ENCODE measurements at regions of chr16 and their contacts with region 1.

Region 1: DNA sequence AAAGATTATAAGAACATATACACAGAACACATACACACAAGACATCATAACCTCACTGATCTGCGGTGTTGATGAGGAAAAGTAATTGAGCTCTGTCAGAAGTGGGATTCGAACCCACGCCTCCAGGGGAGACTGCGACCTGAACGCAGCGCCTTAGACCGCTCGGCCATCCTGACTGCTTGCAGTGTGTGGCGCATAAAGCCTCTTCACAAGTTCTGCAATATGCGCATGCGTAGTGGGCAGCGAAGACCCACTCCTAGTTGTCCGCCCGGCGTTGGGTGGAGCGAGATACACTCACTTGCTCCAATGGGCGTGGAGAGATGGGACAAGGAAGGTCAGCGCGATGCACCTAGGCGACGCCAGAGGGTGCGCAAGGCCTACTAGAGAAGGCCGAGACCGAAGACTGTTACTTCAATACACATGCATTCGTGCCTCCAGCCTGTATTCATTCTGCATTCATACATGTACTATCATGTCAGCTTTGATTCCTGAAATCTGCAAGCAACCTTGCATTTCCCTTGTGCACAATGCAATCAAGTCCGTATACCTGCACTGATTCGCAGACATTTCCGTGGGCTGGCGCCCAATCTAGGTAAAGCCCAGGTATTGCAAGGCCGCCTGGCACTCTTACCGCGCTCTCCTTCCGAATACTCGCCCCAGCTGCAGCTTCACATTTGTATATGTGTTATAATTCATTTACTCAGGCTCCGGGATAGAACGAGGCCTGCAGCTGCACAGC is 16.1 kb upstream of the PLLP start:
- DNase-seq: peak; percentile 99
- H3K4me3 ChIP-seq: peak overlapping the region; percentile 52
- H3K4me3 Mint-ChIP-seq: peak overlapping the region; percentile 21
- H3K27ac Mint-ChIP-seq: no peak overlapping the region
- H3K4me1 ChIP-seq: peaks cover 30% of the 10 kb centered on the region
- H3K4me1 Mint-ChIP-seq: peaks cover 26% of the 10 kb centered on the region
- H3K27me3 ChIP-seq: no peaks in the 10 kb centered on the region
- H3K27me3 Mint-ChIP-seq: no peaks in the 10 kb centered on the region
- CTCF ChIP-seq: peak; percentile 97

Region 2: GRCh38 chr16:56938422-56939156 is 362.0 kb before region 1 on chr16:
- CTCF ChIA-PET with region 1: no interaction called
- POLR2A ChIA-PET with region 1: no interaction called
- intact Hi-C with region 1: no loop called
- DNase-seq: no peak
- H3K4me3 ChIP-seq: no peak overlapping the region
- H3K4me3 Mint-ChIP-seq: no peak overlapping the region
- H3K27ac Mint-ChIP-seq: peak overlapping the region; percentile 43
- H3K4me1 ChIP-seq: peaks cover 12% of the 10 kb centered on the region
- H3K4me1 Mint-ChIP-seq: peaks cover 23% of the 10 kb centered on the region
- H3K27me3 ChIP-seq: no peaks in the 10 kb centered on the region
- H3K27me3 Mint-ChIP-seq: no peaks in the 10 kb centered on the region
- CTCF ChIP-seq: no peak

Region 3: DNA sequence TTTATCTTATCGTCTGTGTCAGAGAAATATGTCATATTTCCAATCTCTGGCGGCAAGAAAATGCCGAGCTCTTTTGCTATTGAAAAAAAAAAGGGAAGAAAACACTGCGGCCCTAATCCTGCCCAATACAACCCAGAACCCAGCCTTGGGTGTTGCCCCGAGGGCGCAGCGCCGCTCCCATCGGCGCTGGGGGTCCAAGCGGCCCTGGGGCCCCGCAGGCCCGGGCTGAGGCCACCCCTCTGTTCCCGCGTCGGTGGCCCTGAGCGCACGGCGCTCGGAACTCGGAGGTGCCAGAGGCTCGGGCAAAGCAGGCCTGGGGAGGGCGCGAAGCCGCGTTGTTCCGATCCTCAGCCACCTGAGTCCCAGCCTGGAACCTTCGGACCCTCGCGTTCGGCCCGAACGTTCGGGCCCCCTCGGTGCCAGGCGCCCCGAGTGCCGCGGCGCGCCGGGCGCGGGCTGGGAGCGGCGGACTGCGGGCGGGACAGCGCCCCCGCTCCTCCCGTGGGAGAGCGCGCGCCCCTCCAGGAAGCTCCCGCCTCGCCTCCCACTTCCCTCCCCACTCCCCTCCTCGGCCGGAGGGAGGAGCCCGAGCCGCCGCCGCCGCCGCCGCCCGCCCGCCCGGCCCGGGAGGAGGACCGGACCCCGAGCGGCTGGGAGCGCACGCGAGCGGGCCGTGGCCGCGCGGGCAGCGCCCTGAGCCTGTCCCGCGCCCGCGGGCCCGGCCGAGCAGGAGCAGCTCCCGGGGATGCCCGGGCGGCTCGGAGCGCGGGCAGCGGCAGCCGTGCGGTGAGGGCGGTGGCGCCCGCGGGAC is 208.4 kb before region 1 on chr16 and contains the start of gene CPNE2:
- CTCF ChIA-PET with region 1: no interaction called
- POLR2A ChIA-PET with region 1: no interaction called
- intact Hi-C with region 1: loop called (anchors 5 kb)
- DNase-seq: peak; percentile 68 to 82
- H3K4me3 ChIP-seq: peak within 1 kb of the TSS; percentile 85
- H3K4me3 Mint-ChIP-seq: peak within 1 kb of the TSS; percentile 77
- H3K27ac Mint-ChIP-seq: peak within 1 kb of the TSS; percentile 59
- H3K4me1 ChIP-seq: peaks cover 14% of the 10 kb centered on the region
- H3K4me1 Mint-ChIP-seq: peaks cover 12% of the 10 kb centered on the region
- H3K27me3 ChIP-seq: no peaks in the 10 kb centered on the region
- H3K27me3 Mint-ChIP-seq: no peaks in the 10 kb centered on the region
- CTCF ChIP-seq: peak in 1 of 2 experiments; percentile 7
- total RNA-seq, gene CPNE2: 37.7 and 46.3 TPM in 2 replicates

Region 4: GRCh38 chr16:57244767-57245471 is 55.6 kb before region 1 on chr16 and contains the start of gene ARL2BP:
- CTCF ChIA-PET with region 1: interaction called, 7 read pairs
- POLR2A ChIA-PET with region 1: interaction called, 5 read pairs
- intact Hi-C with region 1: loop called (anchors 1 kb)
- DNase-seq: peak; percentile 99 to 100
- H3K4me3 ChIP-seq: peak within 1 kb of the TSS; percentile 51
- H3K4me3 Mint-ChIP-seq: peak within 1 kb of the TSS; percentile 85
- H3K27ac Mint-ChIP-seq: peak within 1 kb of the TSS; percentile 87
- H3K4me1 ChIP-seq: no peaks in the 10 kb centered on the region
- H3K4me1 Mint-ChIP-seq: peaks cover 8% of the 10 kb centered on the region
- H3K27me3 ChIP-seq: no peaks in the 10 kb centered on the region
- H3K27me3 Mint-ChIP-seq: no peaks in the 10 kb centered on the region
- CTCF ChIP-seq: peak in 1 of 2 experiments; percentile 10
- total RNA-seq, gene ARL2BP: 38.5 and 47.6 TPM in 2 replicates

Region 5: DNA sequence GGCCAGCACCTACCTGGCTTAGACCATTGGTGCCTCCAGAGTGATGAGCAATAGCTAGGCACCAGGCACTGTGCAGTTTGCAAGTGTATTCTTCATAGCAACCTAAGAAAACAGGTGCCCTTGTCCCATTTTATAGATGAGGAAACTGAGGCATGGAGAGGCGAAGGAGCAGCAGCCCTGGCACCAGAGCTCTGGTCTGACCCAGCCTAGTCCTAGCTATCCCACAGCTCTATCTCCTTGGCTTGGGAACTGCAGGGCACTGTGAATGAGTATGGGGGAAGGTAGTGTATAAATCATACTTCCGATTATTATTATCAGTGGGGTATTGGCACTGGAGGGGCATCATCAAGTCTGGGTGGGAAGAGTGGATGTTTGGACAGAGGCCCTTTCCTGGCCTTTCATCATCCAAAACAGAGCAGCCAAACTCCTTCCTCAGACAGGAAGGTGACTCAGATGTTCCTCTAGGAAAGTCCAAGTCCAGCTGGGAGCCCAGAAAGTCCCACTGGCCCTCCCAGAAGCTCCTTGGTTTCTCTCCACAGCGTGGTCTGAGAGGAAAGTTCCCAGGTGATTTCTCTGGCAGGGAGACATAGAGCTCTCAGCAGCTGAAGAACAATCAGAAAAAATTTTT is 15.9 kb after region 1 on chr16:
- CTCF ChIA-PET with region 1: interaction called, 4 read pairs
- POLR2A ChIA-PET with region 1: no interaction called
- intact Hi-C with region 1: loop called (anchors 1 kb)
- DNase-seq: peak in 1 of 2 experiments; percentile 20
- H3K4me3 ChIP-seq: no peak overlapping the region
- H3K4me3 Mint-ChIP-seq: no peak overlapping the region
- H3K27ac Mint-ChIP-seq: no peak overlapping the region
- H3K4me1 ChIP-seq: peaks cover 17% of the 10 kb centered on the region
- H3K4me1 Mint-ChIP-seq: peaks cover 6% of the 10 kb centered on the region
- H3K27me3 ChIP-seq: no peaks in the 10 kb centered on the region
- H3K27me3 Mint-ChIP-seq: no peaks in the 10 kb centered on the region
- CTCF ChIP-seq: no peak

Region 6: GRCh38 chr16:57377080-57377841 is 76.7 kb after region 1 on chr16:
- CTCF ChIA-PET with region 1: interaction called, 3 read pairs
- POLR2A ChIA-PET with region 1: no interaction called
- intact Hi-C with region 1: loop called (anchors 1 kb)
- DNase-seq: peak in 1 of 2 experiments; percentile 29
- H3K4me3 ChIP-seq: no peak overlapping the region
- H3K4me3 Mint-ChIP-seq: no peak overlapping the region
- H3K27ac Mint-ChIP-seq: peak overlapping the region; percentile 33
- H3K4me1 ChIP-seq: peaks cover 18% of the 10 kb centered on the region
- H3K4me1 Mint-ChIP-seq: peaks cover 20% of the 10 kb centered on the region
- H3K27me3 ChIP-seq: no peaks in the 10 kb centered on the region
- H3K27me3 Mint-ChIP-seq: no peaks in the 10 kb centered on the region
- CTCF ChIP-seq: peak in 1 of 2 experiments; percentile 17

Region 7: DNA sequence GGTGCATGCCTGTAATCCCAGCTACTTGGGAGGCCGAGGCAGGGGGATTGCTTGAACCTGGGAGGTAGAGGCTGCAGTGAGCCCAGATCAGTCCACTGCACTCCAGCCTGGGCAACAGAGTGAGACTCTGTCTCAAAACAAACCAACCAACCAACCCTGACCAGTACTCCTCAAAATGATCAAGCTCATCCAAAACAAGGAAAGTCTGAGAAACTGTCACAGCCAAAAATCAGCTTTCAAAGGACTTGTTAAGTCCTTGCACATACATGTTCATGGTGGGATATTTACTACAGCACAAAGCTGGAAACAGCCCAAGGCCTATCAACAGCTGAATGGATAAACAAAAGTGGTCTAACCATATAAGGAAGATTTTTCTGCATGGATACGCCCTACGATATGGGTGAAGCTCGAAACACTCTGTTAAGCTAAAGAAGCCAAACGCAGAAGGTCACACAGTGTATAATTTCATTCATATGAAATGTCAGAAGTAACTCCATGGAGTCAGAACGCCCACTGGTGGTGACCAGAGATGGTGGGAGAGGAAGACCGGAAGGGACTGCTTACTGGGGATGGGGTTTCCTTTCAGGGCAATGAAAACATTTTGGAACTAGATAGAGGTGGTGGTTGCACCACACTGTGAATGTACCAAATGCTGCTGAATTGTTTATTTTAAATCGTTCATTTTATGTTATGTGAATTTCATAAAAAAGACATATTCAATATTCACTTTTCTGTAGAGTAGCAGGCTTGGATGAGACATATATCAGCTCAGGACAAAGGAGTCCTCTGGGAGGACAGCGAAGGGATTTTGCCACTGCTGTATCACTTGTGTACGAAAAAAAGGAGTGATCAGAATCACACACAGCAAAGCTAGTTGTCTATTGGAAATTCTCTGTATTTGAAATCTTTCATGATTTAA is 121.7 kb after region 1 on chr16:
- CTCF ChIA-PET with region 1: interaction called, 88 read pairs
- POLR2A ChIA-PET with region 1: interaction called, 6 read pairs
- intact Hi-C with region 1: loop called (anchors 1 kb)
- DNase-seq: peak in 1 of 2 experiments; percentile 75
- H3K4me3 ChIP-seq: no peak overlapping the region
- H3K4me3 Mint-ChIP-seq: peak overlapping the region; percentile 5
- H3K27ac Mint-ChIP-seq: no peak overlapping the region
- H3K4me1 ChIP-seq: peaks cover 14% of the 10 kb centered on the region
- H3K4me1 Mint-ChIP-seq: peaks cover 32% of the 10 kb centered on the region
- H3K27me3 ChIP-seq: no peaks in the 10 kb centered on the region
- H3K27me3 Mint-ChIP-seq: no peaks in the 10 kb centered on the region
- CTCF ChIP-seq: peak; percentile 59 to 97

Region 8: DNA sequence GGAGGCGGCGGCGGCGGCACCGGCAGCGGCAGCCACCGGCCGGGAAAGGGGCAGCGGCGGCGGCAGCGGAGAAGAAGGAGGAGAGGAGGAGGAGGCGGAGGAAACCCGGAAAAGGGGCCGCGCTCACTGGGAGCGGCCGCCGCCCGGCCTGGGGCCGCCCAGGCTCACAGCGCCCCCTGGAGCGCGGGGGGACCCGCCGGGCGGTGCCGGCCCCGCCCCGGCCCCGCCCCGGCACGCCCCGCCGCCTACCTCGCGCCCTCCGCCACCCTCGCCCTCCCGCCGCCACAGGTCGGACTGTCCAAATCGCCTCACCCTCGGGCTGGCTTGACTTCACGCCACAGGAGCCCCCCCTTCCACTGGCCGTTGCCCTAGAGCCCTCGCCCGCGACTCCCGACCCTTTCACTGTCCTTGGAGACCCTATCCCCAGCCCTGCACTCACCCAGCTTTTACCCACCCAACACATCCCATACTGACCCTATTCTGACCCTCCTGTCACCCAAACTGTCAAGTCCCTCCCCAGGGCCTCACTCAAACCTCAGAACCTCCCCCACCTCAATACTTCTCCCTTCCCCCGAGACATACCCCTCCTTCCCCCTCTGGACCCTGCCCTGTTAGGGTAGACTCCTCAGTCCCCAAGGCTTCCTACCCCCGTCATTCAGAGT is 897.6 kb after region 1 on chr16 and contains the start of gene CSNK2A2:
- CTCF ChIA-PET with region 1: no interaction called
- POLR2A ChIA-PET with region 1: no interaction called
- intact Hi-C with region 1: no loop called
- DNase-seq: peak; percentile 75 to 86
- H3K4me3 ChIP-seq: peak within 1 kb of the TSS; percentile 95
- H3K4me3 Mint-ChIP-seq: peak within 1 kb of the TSS; percentile 96
- H3K27ac Mint-ChIP-seq: peak within 1 kb of the TSS; percentile 84
- H3K4me1 ChIP-seq: peaks cover 11% of the 10 kb centered on the region
- H3K4me1 Mint-ChIP-seq: peaks cover 12% of the 10 kb centered on the region
- H3K27me3 ChIP-seq: no peaks in the 10 kb centered on the region
- H3K27me3 Mint-ChIP-seq: peaks cover 8% of the 10 kb centered on the region
- CTCF ChIP-seq: peak; percentile 20 to 49
- total RNA-seq, gene CSNK2A2: 165 and 181 TPM in 2 replicates